ENCODE measurements at regions of chr9 and their contacts with region 1.

Region 1: DNA sequence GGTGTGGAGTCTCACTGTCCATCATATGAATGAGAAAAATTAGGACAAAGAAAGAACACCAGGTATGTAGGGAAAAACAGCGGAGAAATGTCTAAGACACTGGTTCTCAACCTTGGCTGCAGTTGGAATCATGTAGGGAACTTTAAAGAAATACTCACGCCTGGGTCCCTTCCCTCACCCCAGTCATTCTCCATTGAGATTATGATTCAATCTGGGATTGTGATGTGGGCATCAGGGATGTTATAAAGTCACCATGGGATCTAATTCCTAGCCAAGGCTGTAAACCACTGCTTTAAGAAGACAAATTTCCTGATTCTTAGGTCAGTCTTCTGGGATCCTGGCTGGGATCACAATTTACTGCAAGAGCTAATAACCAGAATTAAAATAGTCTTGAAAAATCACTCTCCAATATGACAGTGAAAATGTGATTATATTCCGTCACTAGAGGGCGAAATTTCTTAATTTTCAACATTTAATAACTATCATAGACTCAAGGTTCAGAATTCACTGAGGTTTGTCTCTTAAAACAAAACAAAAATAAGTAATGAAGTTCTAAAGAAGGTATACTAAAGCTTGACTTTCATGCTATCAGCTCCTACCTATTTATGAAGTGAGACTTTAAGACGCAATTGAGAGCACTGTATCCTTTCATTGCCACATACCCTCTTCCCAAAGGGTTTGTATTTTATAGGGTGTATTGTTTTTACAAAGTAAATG is 60.5 kb downstream of the GLDC start:
- DNase-seq: peak in 6 of 9 donors; percentile 2 to 35 (median 26)
- ATAC-seq: no peak
- H3K4me3 ChIP-seq: no peak overlapping the region
- H3K4me3 Mint-ChIP-seq: no peak overlapping the region
- H3K27ac ChIP-seq: no peak overlapping the region
- H3K27ac Mint-ChIP-seq: no peak overlapping the region
- H3K4me1 ChIP-seq: no peaks in the 10 kb centered on the region
- H3K4me1 Mint-ChIP-seq: peaks cover 0 to 3% (median 0%) of the 10 kb centered on the region in 7 donors
- H3K27me3 ChIP-seq: no peaks in the 10 kb centered on the region
- H3K27me3 Mint-ChIP-seq: peaks cover 0 to 11% (median under 1%) of the 10 kb centered on the region in 5 donors

Region 2: GRCh38 chr9:6667633-6668280 is 82.7 kb after region 1 on chr9:
- CTCF ChIA-PET with region 1: no interaction called
- POLR2A ChIA-PET with region 1: no interaction called
- intact Hi-C with region 1: loop called (anchors 1 to 5 kb)
- DNase-seq: peak in 2 of 9 donors; percentile 11 to 14
- ATAC-seq: no peak
- H3K4me3 ChIP-seq: no peak overlapping the region
- H3K4me3 Mint-ChIP-seq: no peak overlapping the region
- H3K27ac ChIP-seq: no peak overlapping the region
- H3K27ac Mint-ChIP-seq: no peak overlapping the region
- H3K4me1 ChIP-seq: no peaks in the 10 kb centered on the region
- H3K4me1 Mint-ChIP-seq: peaks cover 0 to 4% (median 0%) of the 10 kb centered on the region in 7 donors
- H3K27me3 ChIP-seq: no peaks in the 10 kb centered on the region
- H3K27me3 Mint-ChIP-seq: peaks cover 0 to 3% (median 0%) of the 10 kb centered on the region in 5 donors

Region 3: GRCh38 chr9:6686396-6686795 is 101.4 kb after region 1 on chr9:
- CTCF ChIA-PET with region 1: interaction called, 5 read pairs
- POLR2A ChIA-PET with region 1: interaction called, 4 read pairs
- intact Hi-C with region 1: loop called (anchors 1 kb)
- DNase-seq: peak in 1 of 9 donors; percentile 18
- ATAC-seq: no peak
- H3K4me3 ChIP-seq: no peak overlapping the region
- H3K4me3 Mint-ChIP-seq: no peak overlapping the region
- H3K27ac ChIP-seq: no peak overlapping the region
- H3K27ac Mint-ChIP-seq: peak overlapping the region in 1 of 9 donors; percentile 77
- H3K4me1 ChIP-seq: no peaks in the 10 kb centered on the region
- H3K4me1 Mint-ChIP-seq: peaks cover 0 to 23% (median 16%) of the 10 kb centered on the region in 7 donors
- H3K27me3 ChIP-seq: no peaks in the 10 kb centered on the region
- H3K27me3 Mint-ChIP-seq: no peaks in the 10 kb centered on the region

Region 4: DNA sequence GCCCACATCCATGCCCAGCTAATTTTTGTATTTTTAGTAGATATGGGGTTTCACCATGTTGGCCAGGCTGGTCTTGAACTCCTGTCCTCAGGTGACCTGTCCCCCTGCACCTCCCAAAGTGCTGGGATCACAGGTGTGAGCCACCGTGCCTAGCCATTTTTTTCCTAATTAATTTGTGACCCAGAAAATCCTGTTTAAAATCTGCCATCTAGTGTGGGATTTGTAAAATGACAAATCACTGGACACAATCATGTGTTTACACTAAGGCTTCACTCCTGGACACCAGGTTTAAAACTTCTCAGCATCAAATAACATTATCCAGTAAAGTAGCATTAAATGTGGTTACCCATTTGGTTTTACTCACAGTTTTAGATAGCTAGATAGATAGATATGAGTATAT is 154.2 kb after region 1 on chr9:
- CTCF ChIA-PET with region 1: no interaction called
- POLR2A ChIA-PET with region 1: no interaction called
- intact Hi-C with region 1: loop called (anchors 1 to 5 kb)
- DNase-seq: no peak
- ATAC-seq: no peak
- H3K4me3 ChIP-seq: no peak overlapping the region
- H3K4me3 Mint-ChIP-seq: no peak overlapping the region
- H3K27ac ChIP-seq: no peak overlapping the region
- H3K27ac Mint-ChIP-seq: no peak overlapping the region
- H3K4me1 ChIP-seq: no peaks in the 10 kb centered on the region
- H3K4me1 Mint-ChIP-seq: no peaks in the 10 kb centered on the region
- H3K27me3 ChIP-seq: no peaks in the 10 kb centered on the region
- H3K27me3 Mint-ChIP-seq: peaks cover 0 to 3% (median 0%) of the 10 kb centered on the region in 5 donors

Region 5: GRCh38 chr9:6845880-6846279 is 260.8 kb after region 1 on chr9:
- CTCF ChIA-PET with region 1: no interaction called
- POLR2A ChIA-PET with region 1: no interaction called
- intact Hi-C with region 1: loop called in 1 of 2 experiments (anchors 10 kb)
- DNase-seq: no peak
- ATAC-seq: no peak
- H3K4me3 ChIP-seq: no peak overlapping the region
- H3K4me3 Mint-ChIP-seq: peak overlapping the region in 1 of 10 donors; percentile 1
- H3K27ac ChIP-seq: no peak overlapping the region
- H3K27ac Mint-ChIP-seq: peak overlapping the region in 1 of 9 donors; percentile 79
- H3K4me1 ChIP-seq: no peaks in the 10 kb centered on the region
- H3K4me1 Mint-ChIP-seq: peaks cover 7 to 30% (median 20%) of the 10 kb centered on the region in 7 donors
- H3K27me3 ChIP-seq: no peaks in the 10 kb centered on the region
- H3K27me3 Mint-ChIP-seq: no peaks in the 10 kb centered on the region

Region 6: DNA sequence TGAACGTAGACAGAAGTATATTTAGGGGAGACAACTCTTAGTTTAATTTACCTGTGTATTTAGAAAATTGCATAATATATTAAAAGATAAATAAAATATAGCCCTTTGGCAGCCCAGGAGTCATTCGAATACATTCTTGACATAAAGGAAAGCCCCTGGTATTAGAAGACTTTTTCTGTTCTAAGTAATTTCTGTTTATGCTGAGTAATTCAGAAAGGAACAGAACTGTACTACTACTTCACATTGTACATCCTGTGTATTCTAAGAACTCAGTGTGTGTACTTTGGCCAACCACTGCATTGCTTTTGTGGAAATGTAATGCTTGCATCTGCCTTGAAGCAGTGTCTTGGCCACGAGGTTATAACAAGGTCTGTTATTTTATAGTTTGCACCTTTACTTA is 309.1 kb after region 1 on chr9:
- CTCF ChIA-PET with region 1: no interaction called
- POLR2A ChIA-PET with region 1: no interaction called
- intact Hi-C with region 1: loop called in 1 of 2 experiments (anchors 5 kb)
- DNase-seq: no peak
- ATAC-seq: no peak
- H3K4me3 ChIP-seq: no peak overlapping the region
- H3K4me3 Mint-ChIP-seq: peak overlapping the region in 1 of 10 donors; percentile 69
- H3K27ac ChIP-seq: no peak overlapping the region
- H3K27ac Mint-ChIP-seq: peak overlapping the region in 2 of 9 donors; percentile 47 to 78
- H3K4me1 ChIP-seq: peaks cover 6 to 12% of the 10 kb centered on the region in 2 donors
- H3K4me1 Mint-ChIP-seq: peaks cover 40 to 71% (median 54%) of the 10 kb centered on the region in 7 donors
- H3K27me3 ChIP-seq: no peaks in the 10 kb centered on the region
- H3K27me3 Mint-ChIP-seq: no peaks in the 10 kb centered on the region

Region 7: GRCh38 chr9:6930827-6931226 is 345.8 kb after region 1 on chr9:
- CTCF ChIA-PET with region 1: no interaction called
- POLR2A ChIA-PET with region 1: no interaction called
- intact Hi-C with region 1: no loop called
- DNase-seq: no peak
- ATAC-seq: no peak
- H3K4me3 ChIP-seq: no peak overlapping the region
- H3K4me3 Mint-ChIP-seq: no peak overlapping the region
- H3K27ac ChIP-seq: no peak overlapping the region
- H3K27ac Mint-ChIP-seq: no peak overlapping the region
- H3K4me1 ChIP-seq: no peaks in the 10 kb centered on the region
- H3K4me1 Mint-ChIP-seq: peaks cover 6 to 47% (median 29%) of the 10 kb centered on the region in 7 donors
- H3K27me3 ChIP-seq: no peaks in the 10 kb centered on the region
- H3K27me3 Mint-ChIP-seq: no peaks in the 10 kb centered on the region